Breast epithelium (tissue), 4 donors: ENCODE measurements at regions of chr6 and their contacts with region 1.

Region 1: GRCh38 chr6:32415511-32416019 is 8.6 kb upstream of the BTNL2 start:
- DNase-seq: peak; percentile 61 to 72
- H3K4me3 ChIP-seq: peak overlapping the region in 1 of 3 donors; percentile 36
- H3K27ac ChIP-seq: no peak overlapping the region
- H3K4me1 ChIP-seq: no peaks in the 10 kb centered on the region
- H3K27me3 ChIP-seq: peaks cover 0 to 42% of the 10 kb centered on the region in 2 donors
- CTCF ChIP-seq: peak; percentile 94 to 97 (median 96)
- POLR2A ChIP-seq: no peak

Region 2: DNA sequence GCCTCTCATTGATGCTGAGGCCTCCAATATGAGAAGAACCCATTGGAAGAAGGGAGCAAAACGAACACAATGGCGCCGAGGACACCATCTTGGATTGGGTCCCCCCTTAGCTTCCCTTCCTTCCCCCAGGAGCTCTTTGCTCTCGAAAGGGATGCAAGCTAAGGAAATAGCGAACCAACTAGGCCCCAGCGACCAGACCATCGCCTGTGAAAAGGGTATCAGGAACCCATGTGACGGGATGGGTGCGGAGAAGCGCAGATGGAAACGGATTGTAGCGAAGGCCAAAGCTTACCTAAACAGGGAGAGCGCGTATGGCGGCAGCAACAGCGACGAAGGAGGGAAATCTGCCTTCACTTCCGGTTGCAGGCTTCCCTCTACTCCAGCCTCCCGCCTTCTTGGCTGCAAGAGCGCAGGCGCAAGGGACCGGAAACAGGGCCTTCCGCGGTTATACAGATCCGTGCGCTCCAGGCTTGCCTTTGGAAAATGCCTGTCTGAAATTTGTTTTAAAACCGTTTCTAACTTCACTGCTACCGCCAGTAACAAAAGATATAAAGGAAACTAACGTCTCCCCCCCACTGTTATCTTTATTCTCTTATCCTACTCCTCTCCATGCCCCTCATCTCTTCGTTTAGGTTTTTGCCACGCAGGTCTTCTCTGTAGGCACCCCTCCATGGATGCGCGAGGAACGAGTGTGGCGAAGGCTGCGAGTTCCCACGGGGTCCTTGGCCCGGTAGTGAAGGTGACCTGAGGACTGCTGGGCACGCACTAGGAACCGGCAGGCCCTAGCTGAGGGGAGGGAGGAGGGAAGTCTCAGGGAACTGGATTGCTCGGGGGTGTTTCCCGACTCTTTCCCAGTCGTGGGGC is 873.7 kb before region 1 on chr6 and contains the start of gene DDX39B:
- intact Hi-C with region 1: no loop called
- DNase-seq: peak; percentile 94 to 96
- H3K4me3 ChIP-seq: peak within 1 kb of the TSS; percentile 62 to 80 (median 67)
- H3K27ac ChIP-seq: peak within 1 kb of the TSS; percentile 95 to 97
- H3K4me1 ChIP-seq: peaks cover 11 to 22% of the 10 kb centered on the region in 2 donors
- H3K27me3 ChIP-seq: no peaks in the 10 kb centered on the region
- CTCF ChIP-seq: no peak
- POLR2A ChIP-seq: peak; percentile 78
- total RNA-seq, gene DDX39B: 315 to 336 (median 334) TPM

Region 3: GRCh38 chr6:32402812-32403211 is 12.8 kb before region 1 on chr6:
- intact Hi-C with region 1: loop called (anchors 2 kb)
- DNase-seq: no peak
- H3K4me3 ChIP-seq: no peak overlapping the region
- H3K27ac ChIP-seq: no peak overlapping the region
- H3K4me1 ChIP-seq: no peaks in the 10 kb centered on the region
- H3K27me3 ChIP-seq: peaks cover 0 to 33% of the 10 kb centered on the region in 2 donors
- CTCF ChIP-seq: no peak
- POLR2A ChIP-seq: no peak

Region 4: GRCh38 chr6:32700391-32701040 is 285.0 kb after region 1 on chr6:
- intact Hi-C with region 1: loop called (anchors 1 kb)
- DNase-seq: peak in 1 of 2 donors; percentile 25
- H3K4me3 ChIP-seq: no peak overlapping the region
- H3K27ac ChIP-seq: no peak overlapping the region
- H3K4me1 ChIP-seq: no peaks in the 10 kb centered on the region
- H3K27me3 ChIP-seq: no peaks in the 10 kb centered on the region
- CTCF ChIP-seq: peak; percentile 13 to 67 (median 66)
- POLR2A ChIP-seq: no peak